ENCODE measurements at regions of chr6 and their contacts with region 1.

Region 1: GRCh38 chr6:126955621-126956020 is 162.8 kb upstream of the RSPO3 start:
- DNase-seq: peak; percentile 30
- H3K4me3 ChIP-seq: no peak overlapping the region
- H3K27ac ChIP-seq: no peak overlapping the region
- H3K4me1 ChIP-seq: no peaks in the 10 kb centered on the region
- H3K27me3 ChIP-seq: peaks cover 4% of the 10 kb centered on the region
- CTCF ChIP-seq: no peak

Region 2: GRCh38 chr6:127015858-127016257 is 60.2 kb after region 1 on chr6:
- CTCF ChIA-PET with region 1: no interaction called
- dilution Hi-C with region 1: no loop called
- in situ Hi-C with region 1: no loop called
- intact Hi-C with region 1: loop called (anchors 2 kb)
- DNase-seq: no peak
- H3K4me3 ChIP-seq: no peak overlapping the region
- H3K27ac ChIP-seq: no peak overlapping the region
- H3K4me1 ChIP-seq: no peaks in the 10 kb centered on the region
- H3K27me3 ChIP-seq: peaks cover 2% of the 10 kb centered on the region
- CTCF ChIP-seq: no peak

Measured in mammary epithelial cell (primary cell).